CD14-positive monocyte (primary cell): ENCODE measurements at regions of chr12 and their contacts with region 1.

Region 1: DNA sequence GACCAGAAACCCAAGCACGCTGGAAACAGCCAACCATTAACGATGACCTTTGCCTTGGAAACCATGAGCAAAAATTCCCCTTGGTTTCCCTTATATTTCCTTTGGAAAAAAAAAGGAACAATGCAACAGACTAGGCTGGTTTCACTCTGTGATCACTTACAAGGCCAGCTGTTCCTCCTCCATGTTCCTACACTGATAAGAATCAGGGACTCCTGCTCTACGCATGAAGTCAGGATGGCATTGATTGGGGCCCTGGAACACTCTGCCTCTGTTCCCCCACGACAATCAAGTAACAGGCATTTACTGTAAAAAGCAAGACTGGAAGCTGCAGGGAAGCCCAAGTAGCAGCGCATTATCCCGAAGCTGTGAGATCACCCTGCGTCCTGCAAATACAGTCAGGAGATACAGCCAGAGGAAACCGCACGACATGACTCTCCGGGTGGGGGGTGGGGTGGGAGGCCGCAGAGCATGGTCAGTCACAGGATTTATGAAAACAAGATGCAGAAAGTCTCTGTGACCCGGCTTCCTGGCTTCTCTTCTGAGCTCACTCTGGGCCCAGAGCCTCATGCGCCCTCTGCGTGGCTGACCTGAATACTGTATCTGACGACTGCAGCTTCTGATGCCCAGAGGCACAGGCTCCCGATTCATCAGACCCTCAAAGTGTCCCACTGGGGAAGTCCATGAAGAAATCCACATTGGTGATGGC is 31.1 kb downstream of the SSH1 start:
- DNase-seq: peak; percentile 70 to 83 (median 77)
- H3K4me3 ChIP-seq: peak overlapping the region in 1 of 3 experiments; percentile 33
- H3K4me3 Mint-ChIP-seq: peak overlapping the region; percentile 54 to 85
- H3K27ac ChIP-seq: peak overlapping the region; percentile 45 to 81
- H3K27ac Mint-ChIP-seq: peak overlapping the region; percentile 81 to 96 (median 91)
- H3K4me1 ChIP-seq: peaks cover 65 to 66% of the 10 kb centered on the region in 2 donors
- H3K4me1 Mint-ChIP-seq: peaks cover 63% of the 10 kb centered on the region
- H3K27me3 ChIP-seq: no peaks in the 10 kb centered on the region
- H3K27me3 Mint-ChIP-seq: peaks cover 0 to 1% (median 0%) of the 10 kb centered on the region in 3 donors
- CTCF ChIP-seq: no peak

Region 2: DNA sequence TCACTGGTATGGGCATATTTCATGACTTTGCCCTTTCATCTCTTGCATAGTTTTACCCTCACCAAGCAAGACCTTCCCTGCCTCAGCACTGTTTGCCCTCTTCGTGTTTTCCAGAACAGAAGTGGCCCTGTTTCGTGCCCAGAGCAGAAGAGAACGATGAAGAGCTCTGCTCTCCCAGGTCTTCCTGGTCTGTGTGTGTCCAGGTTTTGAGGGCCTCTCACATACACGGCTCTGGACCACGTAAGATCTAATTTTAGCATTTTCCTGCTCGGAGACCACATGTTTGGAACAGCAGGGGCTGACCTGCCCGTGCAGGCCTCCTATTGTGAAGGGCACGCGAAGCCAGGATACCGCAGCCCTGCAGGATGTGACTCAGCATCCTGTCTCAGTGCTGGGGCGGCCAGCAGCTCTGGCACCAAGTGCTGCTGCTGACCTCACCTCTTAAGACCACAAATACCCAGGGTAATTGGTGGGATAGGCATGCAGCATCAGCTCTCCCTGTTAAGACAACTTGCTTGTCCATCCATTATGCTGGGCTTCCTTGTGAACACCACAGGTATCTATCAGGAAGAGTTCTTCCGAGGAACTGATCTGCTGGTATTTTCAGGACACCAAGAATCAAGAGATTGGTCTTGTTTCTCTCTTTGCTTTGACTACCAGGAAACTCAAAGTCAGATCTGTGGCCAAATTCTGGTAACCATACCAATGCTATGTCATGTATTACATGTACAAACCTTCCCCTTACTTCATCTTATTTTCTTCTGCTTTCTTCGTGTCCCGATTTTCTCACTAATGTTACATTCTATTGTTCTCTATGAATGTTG is 12.2 kb after region 1 on chr12:
- intact Hi-C with region 1: loop called in 1 of 2 experiments (anchors 2 kb)
- DNase-seq: peak; percentile 94 to 97 (median 97)
- H3K4me3 ChIP-seq: peak overlapping the region in 1 of 3 experiments; percentile 9
- H3K4me3 Mint-ChIP-seq: peak overlapping the region; percentile 47 to 75
- H3K27ac ChIP-seq: peak overlapping the region; percentile 76 to 95
- H3K27ac Mint-ChIP-seq: peak overlapping the region; percentile 95 to 98 (median 98)
- H3K4me1 ChIP-seq: peaks cover 42 to 46% of the 10 kb centered on the region in 2 donors
- H3K4me1 Mint-ChIP-seq: peaks cover 60% of the 10 kb centered on the region
- H3K27me3 ChIP-seq: no peaks in the 10 kb centered on the region
- H3K27me3 Mint-ChIP-seq: peaks cover 0 to 3% (median 0%) of the 10 kb centered on the region in 3 donors
- CTCF ChIP-seq: no peak

Region 3: DNA sequence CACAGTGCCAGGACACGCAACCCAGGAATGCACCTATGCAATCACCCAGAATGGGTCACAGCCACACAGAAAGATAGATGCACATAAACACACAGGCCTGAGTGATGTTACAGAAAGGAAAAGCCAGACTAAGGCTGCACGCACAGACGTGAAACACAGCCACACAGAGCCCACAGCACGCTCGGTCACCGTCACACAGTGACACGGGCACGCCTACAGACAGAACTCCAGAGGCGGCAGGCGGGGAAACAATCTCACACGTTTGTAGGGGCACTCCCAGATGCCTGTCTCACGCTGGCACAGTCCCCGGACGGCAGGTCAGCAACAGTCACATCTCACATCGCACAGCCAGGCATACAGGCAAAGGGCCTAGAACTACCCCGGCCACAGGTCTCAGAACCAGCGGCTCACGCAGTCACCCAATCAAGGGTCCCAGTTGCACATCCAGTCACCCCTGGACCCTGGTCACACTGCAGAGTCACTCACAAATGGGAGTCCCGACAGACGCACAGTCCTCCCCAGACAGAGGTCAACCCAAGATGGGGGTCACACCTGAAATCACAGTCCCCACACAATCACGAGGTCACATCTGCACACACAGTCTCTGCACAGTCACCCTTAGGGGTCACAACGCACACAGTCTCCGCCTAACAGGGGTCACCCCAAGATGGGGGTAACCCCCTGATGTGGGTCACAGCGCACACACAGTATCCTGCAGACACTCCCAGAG is 30.3 kb after region 1 on chr12:
- intact Hi-C with region 1: loop called (anchors 1 to 5 kb)
- DNase-seq: peak; percentile 84 to 93 (median 90)
- H3K4me3 ChIP-seq: peak overlapping the region; percentile 79 to 89 (median 82)
- H3K4me3 Mint-ChIP-seq: peak overlapping the region; percentile 97 to 100
- H3K27ac ChIP-seq: peak overlapping the region; percentile 70 to 98
- H3K27ac Mint-ChIP-seq: peak overlapping the region; percentile 94 to 99 (median 98)
- H3K4me1 ChIP-seq: peaks cover 71 to 77% of the 10 kb centered on the region in 2 donors
- H3K4me1 Mint-ChIP-seq: peaks cover 74% of the 10 kb centered on the region
- H3K27me3 ChIP-seq: no peaks in the 10 kb centered on the region
- H3K27me3 Mint-ChIP-seq: peaks cover 0 to 2% (median 0%) of the 10 kb centered on the region in 3 donors
- CTCF ChIP-seq: no peak

Region 4: GRCh38 chr12:108868781-108869180 is 42.5 kb after region 1 on chr12:
- intact Hi-C with region 1: no loop called
- DNase-seq: no peak
- H3K4me3 ChIP-seq: no peak overlapping the region
- H3K4me3 Mint-ChIP-seq: no peak overlapping the region
- H3K27ac ChIP-seq: no peak overlapping the region
- H3K27ac Mint-ChIP-seq: no peak overlapping the region
- H3K4me1 ChIP-seq: peaks cover 4 to 6% of the 10 kb centered on the region in 2 donors
- H3K4me1 Mint-ChIP-seq: peaks cover 9% of the 10 kb centered on the region
- H3K27me3 ChIP-seq: no peaks in the 10 kb centered on the region
- H3K27me3 Mint-ChIP-seq: no peaks in the 10 kb centered on the region
- CTCF ChIP-seq: no peak

Region 5: DNA sequence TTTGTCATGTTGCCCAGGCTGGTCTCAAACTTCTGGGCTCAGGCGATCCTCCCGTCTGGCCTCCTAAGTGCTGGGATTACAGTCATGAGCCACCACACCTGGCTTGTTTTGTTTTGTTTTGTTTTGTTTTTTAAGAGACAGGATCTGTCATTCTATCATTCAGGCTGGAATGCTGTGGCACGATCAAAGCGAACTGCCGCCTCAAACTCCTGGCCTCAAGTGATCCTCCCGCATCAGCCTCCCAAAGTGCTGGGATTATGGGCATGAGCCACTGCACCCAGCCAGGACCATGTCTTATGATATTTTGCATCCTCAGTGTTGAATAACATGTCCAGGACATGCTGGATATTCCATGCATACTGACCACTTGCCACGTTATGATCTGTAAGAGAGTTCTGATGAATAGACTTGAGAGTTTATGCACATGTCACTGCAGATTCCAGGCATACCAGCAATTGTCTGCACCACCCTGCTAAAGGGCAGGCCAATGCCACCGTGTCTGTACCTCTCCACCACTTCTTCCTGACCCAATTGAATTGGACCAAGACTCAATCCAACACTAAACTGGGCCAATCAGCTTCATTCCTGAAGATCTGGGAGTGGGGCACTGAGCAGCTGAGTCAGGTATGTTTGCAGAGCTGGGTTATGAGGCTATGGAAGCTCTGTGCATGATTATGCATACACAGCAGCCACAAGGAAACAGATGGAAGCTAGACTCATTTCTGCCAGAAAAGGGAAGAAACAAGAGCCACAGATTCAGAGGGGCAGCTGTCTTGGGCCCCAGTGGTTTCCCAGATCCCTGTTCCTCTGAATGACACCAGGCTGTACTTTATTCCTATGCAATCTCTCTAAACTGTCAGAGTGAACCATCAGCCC is 81.5 kb after region 1 on chr12:
- intact Hi-C with region 1: loop called in 1 of 2 experiments (anchors 10 kb)
- DNase-seq: peak; percentile 37 to 64 (median 56)
- H3K4me3 ChIP-seq: peak overlapping the region in 1 of 3 experiments; percentile 51
- H3K4me3 Mint-ChIP-seq: peak overlapping the region in 1 of 2 donors; percentile 11
- H3K27ac ChIP-seq: peak overlapping the region; percentile 8 to 98
- H3K27ac Mint-ChIP-seq: peak overlapping the region; percentile 80 to 99 (median 98)
- H3K4me1 ChIP-seq: peaks cover 62 to 63% of the 10 kb centered on the region in 2 donors
- H3K4me1 Mint-ChIP-seq: peaks cover 62% of the 10 kb centered on the region
- H3K27me3 ChIP-seq: no peaks in the 10 kb centered on the region
- H3K27me3 Mint-ChIP-seq: peaks cover 0 to 4% (median 0%) of the 10 kb centered on the region in 3 donors
- CTCF ChIP-seq: no peak